HCT116 (cell line): ENCODE measurements at regions of chr13 and their contacts with region 1.

Region 1: GRCh38 chr13:23960566-23961156 is 63.4 kb upstream of the C1QTNF9B start:
- DNase-seq: peak; percentile 27
- ATAC-seq: peak; percentile 89
- H3K4me3 ChIP-seq: no peak overlapping the region
- H3K27ac ChIP-seq: no peak overlapping the region
- H3K4me1 ChIP-seq: peaks cover 0 to 10% of the 10 kb centered on the region in 2 experiments; a peak in 2 of 4 replicates
- H3K27me3 ChIP-seq: 0 out of 2 replicates have a peak, but pooled peaks cover 5% of the 10 kb centered on the region
- CTCF ChIP-seq: peak; percentile 30 to 81 (median 79); a peak in 5 of 6 replicates
- POLR2A ChIP-seq: no peak
- RAD21 ChIP-seq: peak; percentile 52; the same call in 1 of the 2 replicates

Region 2: GRCh38 chr13:23921451-23921888 is 39.2 kb before region 1 on chr13:
- CTCF ChIA-PET with region 1: interaction called, 8 read pairs
- POLR2A ChIA-PET with region 1: no interaction called
- RAD21 ChIA-PET with region 1: interaction called, 3 to 4 read pairs
- intact Hi-C with region 1: loop called (anchors 1 kb)
- DNase-seq: peak; percentile 23
- ATAC-seq: peak; percentile 57
- H3K4me3 ChIP-seq: no peak overlapping the region
- H3K27ac ChIP-seq: no peak overlapping the region
- H3K4me1 ChIP-seq: no peaks in the 10 kb centered on the region
- H3K27me3 ChIP-seq: peaks cover 38% of the 10 kb centered on the region
- CTCF ChIP-seq: peak; percentile 49 to 91 (median 60); a peak in 4 of 6 replicates
- POLR2A ChIP-seq: no peak
- RAD21 ChIP-seq: peak; percentile 73

Region 3: GRCh38 chr13:23928985-23929384 is 31.7 kb before region 1 on chr13:
- CTCF ChIA-PET with region 1: interaction called, 10 read pairs
- POLR2A ChIA-PET with region 1: no interaction called
- RAD21 ChIA-PET with region 1: interaction called in 1 of 2 experiments, 3 read pairs
- intact Hi-C with region 1: no loop called
- DNase-seq: no peak
- ATAC-seq: peak; percentile 63
- H3K4me3 ChIP-seq: no peak overlapping the region
- H3K27ac ChIP-seq: no peak overlapping the region
- H3K4me1 ChIP-seq: peaks cover 0 to 9% of the 10 kb centered on the region in 2 experiments; a peak in 2 of 4 replicates
- H3K27me3 ChIP-seq: no peaks in the 10 kb centered on the region; the same call in 1 of the 2 replicates
- CTCF ChIP-seq: no peak
- POLR2A ChIP-seq: no peak
- RAD21 ChIP-seq: no peak

Region 4: GRCh38 chr13:24228852-24229458 is 268.3 kb after region 1 on chr13:
- CTCF ChIA-PET with region 1: interaction called, 14 read pairs
- POLR2A ChIA-PET with region 1: no interaction called
- RAD21 ChIA-PET with region 1: no interaction called
- intact Hi-C with region 1: no loop called
- DNase-seq: peak; percentile 57
- ATAC-seq: peak; percentile 61
- H3K4me3 ChIP-seq: no peak overlapping the region
- H3K27ac ChIP-seq: no peak overlapping the region
- H3K4me1 ChIP-seq: peaks cover 0 to 2% of the 10 kb centered on the region in 2 experiments; a peak in 1 of 4 replicates
- H3K27me3 ChIP-seq: no peaks in the 10 kb centered on the region
- CTCF ChIP-seq: peak; percentile 48 to 91 (median 90); a peak in 5 of 6 replicates
- POLR2A ChIP-seq: no peak
- RAD21 ChIP-seq: peak; percentile 58